ENCODE measurements at regions of chr3 and their contacts with region 1.

Region 1: GRCh38 chr3:141279077-141279967 is 47.7 kb downstream of the PXYLP1 start:
- DNase-seq: no peak
- ATAC-seq: peak; percentile 88
- H3K4me3 ChIP-seq: no peak overlapping the region
- H3K27ac ChIP-seq: no peak overlapping the region
- H3K4me1 ChIP-seq: no peaks in the 10 kb centered on the region
- H3K27me3 ChIP-seq: no peaks in the 10 kb centered on the region
- CTCF ChIP-seq: peak; percentile 48 to 67 (median 66); a peak in 5 of 6 replicates
- POLR2A ChIP-seq: no peak
- RAD21 ChIP-seq: peak; percentile 60

Region 2: GRCh38 chr3:141011232-141011996 is 267.9 kb before region 1 on chr3:
- CTCF ChIA-PET with region 1: no interaction called
- POLR2A ChIA-PET with region 1: no interaction called
- RAD21 ChIA-PET with region 1: no interaction called
- intact Hi-C with region 1: loop called (anchors 5 kb)
- DNase-seq: peak; percentile 51
- ATAC-seq: peak; percentile 99
- H3K4me3 ChIP-seq: no peak overlapping the region
- H3K27ac ChIP-seq: no peak overlapping the region
- H3K4me1 ChIP-seq: peaks cover 0 to 7% of the 10 kb centered on the region in 2 experiments; a peak in 1 of 4 replicates
- H3K27me3 ChIP-seq: no peaks in the 10 kb centered on the region
- CTCF ChIP-seq: peak; percentile 86 to 92 (median 91)
- POLR2A ChIP-seq: no peak
- RAD21 ChIP-seq: peak; percentile 72

Region 3: GRCh38 chr3:141487521-141488252 is 208.4 kb after region 1 on chr3:
- CTCF ChIA-PET with region 1: no interaction called
- POLR2A ChIA-PET with region 1: no interaction called
- RAD21 ChIA-PET with region 1: no interaction called
- intact Hi-C with region 1: no loop called
- DNase-seq: peak; percentile 59
- ATAC-seq: peak; percentile 71
- H3K4me3 ChIP-seq: peak overlapping the region; percentile 71 to 74
- H3K27ac ChIP-seq: peak overlapping the region; percentile 80
- H3K4me1 ChIP-seq: peaks cover 8 to 25% of the 10 kb centered on the region in 2 experiments
- H3K27me3 ChIP-seq: no peaks in the 10 kb centered on the region
- CTCF ChIP-seq: no peak
- POLR2A ChIP-seq: no peak
- RAD21 ChIP-seq: no peak

Region 4: GRCh38 chr3:141507392-141508066 is 228.2 kb after region 1 on chr3:
- CTCF ChIA-PET with region 1: no interaction called
- POLR2A ChIA-PET with region 1: no interaction called
- RAD21 ChIA-PET with region 1: no interaction called
- intact Hi-C with region 1: no loop called
- DNase-seq: no peak
- ATAC-seq: no peak
- H3K4me3 ChIP-seq: no peak overlapping the region
- H3K27ac ChIP-seq: no peak overlapping the region
- H3K4me1 ChIP-seq: no peaks in the 10 kb centered on the region
- H3K27me3 ChIP-seq: no peaks in the 10 kb centered on the region
- CTCF ChIP-seq: no peak
- POLR2A ChIP-seq: no peak
- RAD21 ChIP-seq: no peak

Measured in HCT116 (cell line).